Calu3 (cell line): ENCODE measurements at regions of chr1 and their contacts with region 1.

Region 1: DNA sequence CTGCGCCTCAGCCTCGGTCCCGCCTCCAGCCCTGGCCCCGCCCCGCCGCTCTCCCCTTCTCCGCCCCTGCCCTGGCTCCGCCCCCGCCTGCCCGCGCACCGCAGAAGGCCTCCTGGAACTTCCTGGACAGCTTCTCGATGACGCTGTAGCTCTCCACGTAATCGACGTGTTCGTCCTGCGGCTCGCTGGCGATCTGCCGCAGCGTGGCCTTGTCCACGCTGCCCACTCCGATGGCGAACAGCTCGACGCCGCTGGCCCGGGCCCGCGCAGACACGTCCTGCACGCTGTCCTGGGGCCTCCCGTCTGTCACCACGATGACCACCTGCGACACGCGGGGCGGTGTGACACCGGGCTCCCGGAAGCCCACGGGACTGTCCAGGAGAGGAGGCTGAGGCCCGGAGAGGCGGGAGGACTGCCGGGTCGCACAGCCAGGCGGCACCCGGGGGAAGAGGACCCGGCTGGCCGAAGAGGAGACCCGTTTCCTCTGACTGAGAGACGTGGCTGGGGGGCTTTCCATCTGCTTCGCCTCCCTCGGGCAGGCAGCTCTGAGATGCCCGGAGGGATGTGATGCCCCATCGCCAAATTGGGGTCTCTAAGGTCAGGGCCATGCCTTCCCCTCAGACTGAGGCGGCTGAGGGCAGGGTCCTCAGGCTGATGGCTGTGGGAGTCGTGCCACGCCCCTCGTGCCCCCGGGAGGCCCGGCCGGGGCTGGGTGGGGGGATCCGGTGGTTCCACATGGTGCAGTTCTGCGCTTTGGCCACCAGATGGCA is 4.6 kb downstream of the MATN1 start:
- DNase-seq: peak; percentile 98
- H3K4me3 Mint-ChIP-seq: peak overlapping the region; percentile 97
- H3K27ac Mint-ChIP-seq: peak overlapping the region; percentile 96
- H3K4me1 Mint-ChIP-seq: no peaks in the 10 kb centered on the region
- H3K27me3 Mint-ChIP-seq: no peaks in the 10 kb centered on the region
- CTCF ChIP-seq: peak; percentile 97

Region 2: GRCh38 chr1:30779294-30780071 is 60.7 kb after region 1 on chr1:
- CTCF ChIA-PET with region 1: interaction called, 116 read pairs
- intact Hi-C with region 1: loop called (anchors 1 kb)
- DNase-seq: peak; percentile 91
- H3K4me3 Mint-ChIP-seq: no peak overlapping the region
- H3K27ac Mint-ChIP-seq: no peak overlapping the region
- H3K4me1 Mint-ChIP-seq: no peaks in the 10 kb centered on the region
- H3K27me3 Mint-ChIP-seq: peaks cover 43% of the 10 kb centered on the region
- CTCF ChIP-seq: peak; percentile 96